MCF 10A (cell line): ENCODE measurements at regions of chr7 and their contacts with region 1.

Region 1: GRCh38 chr7:37694175-37694779 is 10.7 kb downstream of the GPR141 start:
- DNase-seq: peak; percentile 97
- H3K4me3 Mint-ChIP-seq: no peak overlapping the region
- H3K27ac Mint-ChIP-seq: peak overlapping the region; percentile 28
- H3K4me1 Mint-ChIP-seq: peaks cover 24% of the 10 kb centered on the region
- H3K27me3 Mint-ChIP-seq: no peaks in the 10 kb centered on the region
- CTCF ChIP-seq: no peak

Region 2: DNA sequence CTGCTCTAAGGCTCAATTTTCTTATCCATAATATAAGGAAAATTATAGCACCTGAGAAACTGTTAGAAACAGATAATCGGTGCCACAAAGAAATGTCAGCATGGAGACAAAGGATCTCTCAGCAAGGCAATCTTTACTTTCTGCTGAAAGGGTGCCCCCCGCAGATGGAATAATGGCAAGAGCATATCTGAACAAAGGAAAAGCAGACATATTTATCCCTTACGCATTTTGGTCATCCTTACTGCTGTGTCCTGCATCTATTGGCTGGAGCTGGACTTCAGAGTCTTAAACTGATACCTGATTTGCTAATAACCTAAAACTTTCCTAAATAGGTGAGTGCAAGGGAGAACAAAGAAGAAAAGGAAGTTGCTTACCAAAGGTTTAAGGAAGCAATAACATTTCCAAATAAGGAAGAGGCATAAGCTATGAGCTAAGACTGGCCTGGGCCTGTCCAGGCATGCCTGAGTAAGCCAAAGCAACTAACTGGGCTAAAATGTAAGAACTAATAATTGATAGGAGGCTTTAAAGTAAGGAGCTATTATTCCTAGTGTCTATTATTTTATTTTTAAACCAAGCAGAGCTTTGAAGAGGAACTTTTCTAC is 206.0 kb before region 1 on chr7:
- CTCF ChIA-PET with region 1: no interaction called
- POLR2A ChIA-PET with region 1: no interaction called
- intact Hi-C with region 1: no loop called
- DNase-seq: peak; percentile 51
- H3K4me3 Mint-ChIP-seq: no peak overlapping the region
- H3K27ac Mint-ChIP-seq: peak overlapping the region; percentile 96
- H3K4me1 Mint-ChIP-seq: no peaks in the 10 kb centered on the region
- H3K27me3 Mint-ChIP-seq: no peaks in the 10 kb centered on the region
- CTCF ChIP-seq: no peak

Region 3: DNA sequence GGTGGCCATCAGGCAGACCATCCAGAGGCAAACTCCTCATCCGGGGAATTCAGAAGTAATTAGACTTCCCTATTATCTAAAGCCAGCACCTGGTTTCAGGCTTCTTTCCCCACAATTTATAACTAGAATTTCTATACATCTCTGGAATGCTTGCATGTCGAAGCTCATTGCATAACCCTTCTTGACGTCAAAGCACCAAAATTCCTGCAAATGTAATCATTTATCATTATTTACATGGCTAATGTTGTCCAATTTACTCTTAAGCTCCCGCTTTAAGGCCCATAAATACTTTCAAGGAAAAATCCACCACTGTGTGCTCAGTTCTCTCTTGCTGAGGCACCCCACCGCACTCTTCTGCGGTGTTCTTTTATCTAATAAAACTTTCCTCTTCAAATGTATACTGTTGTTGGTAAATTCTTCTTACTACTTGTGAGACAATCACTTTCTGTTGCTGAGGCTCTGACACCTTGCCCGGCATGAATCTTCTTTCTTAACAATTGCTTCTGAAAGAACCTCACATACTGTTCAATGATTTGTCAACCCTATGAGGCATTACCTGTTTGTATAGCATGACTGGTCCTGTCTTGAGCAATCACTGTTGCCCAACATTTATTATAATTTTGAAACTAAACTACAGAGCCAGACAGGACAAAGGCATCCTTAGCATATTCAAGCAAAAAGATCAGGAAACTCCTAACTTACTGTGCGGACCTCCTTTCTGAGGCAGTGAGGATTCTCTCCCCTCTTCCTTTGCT is 28.1 kb before region 1 on chr7:
- CTCF ChIA-PET with region 1: interaction called, 12 read pairs
- POLR2A ChIA-PET with region 1: interaction called, 7 read pairs
- intact Hi-C with region 1: no loop called
- DNase-seq: peak; percentile 95
- H3K4me3 Mint-ChIP-seq: peak overlapping the region; percentile 1
- H3K27ac Mint-ChIP-seq: peak overlapping the region; percentile 70
- H3K4me1 Mint-ChIP-seq: peaks cover 33% of the 10 kb centered on the region
- H3K27me3 Mint-ChIP-seq: no peaks in the 10 kb centered on the region
- CTCF ChIP-seq: no peak

Region 4: GRCh38 chr7:37683246-37684120 is 10.8 kb before region 1 on chr7 and contains the start of gene GPR141:
- CTCF ChIA-PET with region 1: interaction called, 12 read pairs
- POLR2A ChIA-PET with region 1: interaction called, 34 read pairs
- intact Hi-C with region 1: no loop called
- DNase-seq: peak; percentile 56
- H3K4me3 Mint-ChIP-seq: no peak within 1 kb of the TSS
- H3K27ac Mint-ChIP-seq: peak within 1 kb of the TSS; percentile 73
- H3K4me1 Mint-ChIP-seq: peaks cover 13% of the 10 kb centered on the region
- H3K27me3 Mint-ChIP-seq: no peaks in the 10 kb centered on the region
- CTCF ChIP-seq: no peak
- total RNA-seq, gene GPR141: 2.4 and 2.8 TPM in 2 replicates

Region 5: DNA sequence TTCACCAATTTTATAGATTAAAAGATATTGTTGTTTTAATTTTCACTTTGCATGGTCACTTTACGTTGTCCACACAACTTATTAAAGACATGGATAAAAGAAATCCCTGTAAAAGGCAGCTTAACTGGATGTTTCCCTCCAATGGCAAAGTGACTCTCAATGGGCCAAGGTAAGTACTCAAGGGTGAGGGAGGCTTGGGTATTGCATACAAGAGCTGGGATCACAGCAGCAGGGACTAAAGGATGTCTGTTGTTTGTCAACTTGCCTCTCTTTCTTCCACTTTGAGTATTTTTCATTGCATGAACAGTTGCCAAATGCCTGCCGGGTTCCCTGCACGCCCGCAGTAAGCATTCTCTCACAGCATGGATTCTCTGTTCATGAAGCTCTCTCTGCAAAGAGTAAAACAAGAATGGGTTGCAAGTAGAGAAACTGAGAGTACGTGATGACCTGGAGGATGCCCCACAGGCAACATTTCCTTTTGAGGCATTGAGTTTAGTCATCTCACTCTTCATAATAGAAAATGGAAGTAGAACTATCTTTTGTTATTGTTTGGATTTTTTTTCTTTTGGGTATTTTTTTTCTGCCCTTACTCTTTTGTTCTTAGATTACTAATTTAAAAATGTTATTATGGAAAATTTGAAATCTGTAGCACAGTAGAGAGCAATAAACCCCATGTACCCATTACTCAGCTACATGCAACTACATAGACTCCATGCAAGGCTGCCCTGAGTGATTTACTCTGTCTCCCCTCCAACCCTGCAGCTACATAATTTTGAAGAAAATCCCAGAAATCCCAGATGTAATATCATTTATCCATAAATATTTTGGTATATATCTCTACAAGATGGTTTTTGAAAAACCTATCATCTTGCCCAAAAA is 15.6 kb after region 1 on chr7:
- CTCF ChIA-PET with region 1: interaction called, 32 read pairs
- POLR2A ChIA-PET with region 1: interaction called, 21 read pairs
- intact Hi-C with region 1: no loop called
- DNase-seq: no peak
- H3K4me3 Mint-ChIP-seq: no peak overlapping the region
- H3K27ac Mint-ChIP-seq: no peak overlapping the region
- H3K4me1 Mint-ChIP-seq: peaks cover 21% of the 10 kb centered on the region
- H3K27me3 Mint-ChIP-seq: no peaks in the 10 kb centered on the region
- CTCF ChIP-seq: no peak

Region 6: DNA sequence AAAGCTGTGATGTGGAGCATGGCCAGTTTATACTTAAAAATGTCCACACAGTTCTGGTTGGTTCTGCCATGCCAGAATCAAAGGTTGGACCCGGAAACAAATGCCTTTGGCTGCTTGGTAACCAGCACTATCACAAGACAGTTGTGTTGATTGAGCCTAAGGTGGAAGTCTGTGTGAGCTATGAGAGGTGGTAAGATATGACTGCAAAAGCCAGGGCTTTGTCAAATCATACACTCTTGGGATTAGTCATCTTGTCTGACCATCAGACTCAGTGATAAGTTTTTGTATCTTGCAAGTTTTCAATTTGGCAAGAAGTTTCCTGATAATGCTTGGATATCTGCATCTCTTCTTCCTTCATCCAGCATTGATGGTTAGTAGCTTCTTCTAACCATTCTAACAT is 24.8 kb after region 1 on chr7:
- CTCF ChIA-PET with region 1: interaction called, 11 read pairs
- POLR2A ChIA-PET with region 1: interaction called, 3 read pairs
- intact Hi-C with region 1: no loop called
- DNase-seq: no peak
- H3K4me3 Mint-ChIP-seq: no peak overlapping the region
- H3K27ac Mint-ChIP-seq: no peak overlapping the region
- H3K4me1 Mint-ChIP-seq: peaks cover 7% of the 10 kb centered on the region
- H3K27me3 Mint-ChIP-seq: no peaks in the 10 kb centered on the region
- CTCF ChIP-seq: no peak